CD4-positive, alpha-beta memory T cell (primary cell): ENCODE measurements at regions of chrX and their contacts with region 1.

Region 1: DNA sequence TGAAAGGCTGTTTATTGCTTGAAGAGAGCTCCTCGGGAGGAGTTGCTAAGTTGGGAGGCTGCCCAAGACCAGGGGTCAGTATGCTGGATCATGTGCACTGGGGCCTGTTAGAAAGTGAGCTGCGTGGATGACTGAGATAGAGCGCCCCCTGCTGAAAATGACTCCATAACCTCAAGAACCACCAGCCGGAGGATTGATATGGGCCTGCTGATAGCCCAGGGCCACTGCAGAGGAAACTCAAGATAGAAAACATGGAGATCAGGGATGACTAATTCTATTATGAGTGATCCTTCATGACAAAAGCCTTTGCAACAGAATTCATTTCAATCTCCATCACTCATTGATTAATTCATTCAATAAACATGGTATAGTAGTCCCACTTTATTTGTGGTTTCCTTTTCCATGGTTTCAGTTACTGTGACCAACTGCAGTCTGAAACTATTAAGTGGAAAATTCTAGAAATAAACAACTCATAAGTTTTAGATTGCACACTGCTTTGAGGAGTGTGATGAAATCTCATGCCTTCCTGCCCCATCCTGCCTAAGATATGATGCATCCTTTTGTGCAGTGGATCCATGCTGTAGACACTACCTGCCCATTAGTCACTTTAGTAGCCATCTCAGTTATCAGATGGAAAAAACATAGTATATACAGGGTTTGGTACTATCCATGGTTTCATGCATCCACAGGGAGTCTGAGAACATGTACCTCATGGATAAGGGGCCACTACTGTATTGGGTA is 126.7 kb upstream of the MBNL3 start:
- DNase-seq: peak; percentile 33 to 42 (median 37)
- H3K4me3 ChIP-seq: no peak overlapping the region
- H3K4me3 Mint-ChIP-seq: no peak overlapping the region
- H3K27ac ChIP-seq: no peak overlapping the region
- H3K27ac Mint-ChIP-seq: no peak overlapping the region
- H3K4me1 ChIP-seq: no peaks in the 10 kb centered on the region
- H3K4me1 Mint-ChIP-seq: no peaks in the 10 kb centered on the region
- H3K27me3 ChIP-seq: no peaks in the 10 kb centered on the region
- H3K27me3 Mint-ChIP-seq: no peaks in the 10 kb centered on the region

Region 2: DNA sequence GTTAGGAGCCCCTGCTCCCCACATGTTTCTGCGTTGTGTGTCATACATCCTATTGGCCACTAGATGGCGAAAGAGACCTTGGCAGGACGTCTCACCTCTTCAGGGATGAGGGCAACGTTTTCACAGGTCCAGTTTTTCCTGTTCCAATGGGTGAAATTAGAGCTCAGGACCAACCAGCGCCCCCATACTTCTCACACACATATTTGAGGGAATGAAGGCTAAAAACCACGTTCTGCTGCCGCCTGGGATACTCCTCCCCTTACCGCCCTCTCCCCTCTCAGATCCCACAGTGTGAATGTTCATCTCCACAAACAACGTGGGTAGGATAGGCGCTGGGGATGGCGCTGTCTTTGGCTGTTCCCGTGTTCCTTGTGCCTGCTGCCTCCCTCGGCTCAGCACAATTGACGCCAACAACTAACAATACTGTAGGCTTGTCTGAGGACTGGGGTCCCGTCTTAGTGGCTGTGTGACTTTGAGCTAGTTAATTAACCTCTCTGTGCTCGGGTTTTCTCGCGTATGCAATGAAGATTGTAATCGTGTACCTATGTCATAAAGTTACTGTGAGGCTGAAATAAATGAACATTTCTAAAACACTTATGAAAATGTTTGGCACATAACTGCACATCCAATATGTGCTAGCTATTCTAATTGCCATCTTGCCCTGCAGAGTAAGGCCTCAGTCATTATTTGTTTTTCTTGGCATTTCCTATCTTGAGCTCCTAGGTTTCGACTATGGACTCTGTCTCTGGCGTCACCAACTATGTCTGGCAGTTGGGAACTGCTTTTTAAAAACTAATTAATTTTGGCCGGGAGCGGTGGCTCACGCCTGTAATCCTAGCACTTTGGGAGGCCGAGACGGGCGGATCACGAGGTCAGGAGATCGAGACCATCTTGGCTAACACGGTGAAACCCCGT is 773.8 kb before region 1 on chrX:
- CTCF ChIA-PET with region 1: interaction called, 5 read pairs
- POLR2A ChIA-PET with region 1: no interaction called
- intact Hi-C with region 1: loop called (anchors 5 kb)
- DNase-seq: peak in 4 of 5 donors; percentile 50 to 65 (median 52)
- H3K4me3 ChIP-seq: no peak overlapping the region
- H3K4me3 Mint-ChIP-seq: peak overlapping the region in 1 of 8 donors; percentile 16
- H3K27ac ChIP-seq: no peak overlapping the region
- H3K27ac Mint-ChIP-seq: peak overlapping the region in 1 of 7 donors; percentile 12
- H3K4me1 ChIP-seq: no peaks in the 10 kb centered on the region
- H3K4me1 Mint-ChIP-seq: peaks cover 0 to 8% (median 5%) of the 10 kb centered on the region in 4 donors
- H3K27me3 ChIP-seq: no peaks in the 10 kb centered on the region
- H3K27me3 Mint-ChIP-seq: no peaks in the 10 kb centered on the region

Region 3: GRCh38 chrX:132092439-132093065 is 523.0 kb before region 1 on chrX:
- CTCF ChIA-PET with region 1: interaction called, 6 read pairs
- POLR2A ChIA-PET with region 1: no interaction called
- intact Hi-C with region 1: loop called (anchors 5 kb)
- DNase-seq: peak; percentile 39 to 50 (median 42)
- H3K4me3 ChIP-seq: no peak overlapping the region
- H3K4me3 Mint-ChIP-seq: peak overlapping the region in 1 of 8 donors; percentile 11
- H3K27ac ChIP-seq: no peak overlapping the region
- H3K27ac Mint-ChIP-seq: peak overlapping the region in 1 of 7 donors; percentile 41
- H3K4me1 ChIP-seq: no peaks in the 10 kb centered on the region
- H3K4me1 Mint-ChIP-seq: peaks cover 0 to 5% (median 2%) of the 10 kb centered on the region in 4 donors
- H3K27me3 ChIP-seq: no peaks in the 10 kb centered on the region
- H3K27me3 Mint-ChIP-seq: peaks cover 3% of the 10 kb centered on the region in 2 donors

Region 4: DNA sequence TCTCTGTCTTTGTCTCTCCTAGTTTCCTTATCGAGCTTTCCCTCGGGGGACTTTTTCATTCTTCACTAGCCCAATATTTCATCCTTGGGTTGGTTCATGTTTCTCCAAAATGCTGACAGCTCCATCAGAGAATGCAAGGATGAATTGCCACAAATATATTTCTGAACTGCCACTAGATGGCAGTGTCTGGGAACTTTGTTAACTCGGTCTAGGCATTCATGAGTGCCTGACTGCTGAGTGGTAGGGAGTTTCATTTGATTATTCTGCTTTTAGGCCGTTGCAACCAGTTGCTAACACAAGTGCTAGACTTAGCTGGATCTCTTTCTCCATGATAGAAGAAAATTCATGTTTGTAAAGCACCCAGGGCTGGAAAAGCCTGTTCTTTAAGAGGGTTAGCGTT is 322.8 kb before region 1 on chrX:
- CTCF ChIA-PET with region 1: interaction called, 84 read pairs
- POLR2A ChIA-PET with region 1: no interaction called
- intact Hi-C with region 1: loop called (anchors 1 kb)
- DNase-seq: peak; percentile 32 to 49 (median 37)
- H3K4me3 ChIP-seq: no peak overlapping the region
- H3K4me3 Mint-ChIP-seq: no peak overlapping the region
- H3K27ac ChIP-seq: no peak overlapping the region
- H3K27ac Mint-ChIP-seq: no peak overlapping the region
- H3K4me1 ChIP-seq: no peaks in the 10 kb centered on the region
- H3K4me1 Mint-ChIP-seq: peaks cover 0 to under 1% (median 0%) of the 10 kb centered on the region in 4 donors
- H3K27me3 ChIP-seq: no peaks in the 10 kb centered on the region
- H3K27me3 Mint-ChIP-seq: no peaks in the 10 kb centered on the region

Region 5: DNA sequence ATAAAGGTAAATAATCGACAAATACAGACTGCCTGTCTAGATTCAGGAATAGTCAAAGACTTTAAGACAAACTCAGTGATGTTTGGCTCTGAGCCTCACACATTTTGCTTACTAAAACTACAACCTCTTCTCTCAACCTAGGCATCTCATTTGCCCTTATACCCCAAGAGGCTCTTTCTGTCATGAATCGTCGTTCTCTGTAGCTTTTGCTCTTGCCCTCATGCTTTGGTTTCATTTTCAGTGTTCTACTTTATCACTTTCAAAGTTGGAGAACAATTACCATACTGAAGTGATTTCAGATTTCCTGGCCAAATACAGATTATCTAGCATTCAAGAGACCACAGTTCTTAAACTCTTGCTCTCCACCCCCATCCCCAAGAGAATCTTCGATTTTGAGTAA is 282.2 kb before region 1 on chrX:
- CTCF ChIA-PET with region 1: no interaction called
- POLR2A ChIA-PET with region 1: no interaction called
- intact Hi-C with region 1: no loop called
- DNase-seq: no peak
- H3K4me3 ChIP-seq: no peak overlapping the region
- H3K4me3 Mint-ChIP-seq: peak overlapping the region in 3 of 8 donors; percentile 2 to 12 (median 3)
- H3K27ac ChIP-seq: no peak overlapping the region
- H3K27ac Mint-ChIP-seq: peak overlapping the region in 1 of 7 donors; percentile 9
- H3K4me1 ChIP-seq: no peaks in the 10 kb centered on the region
- H3K4me1 Mint-ChIP-seq: peaks cover 2 to 9% (median 5%) of the 10 kb centered on the region in 4 donors
- H3K27me3 ChIP-seq: no peaks in the 10 kb centered on the region
- H3K27me3 Mint-ChIP-seq: no peaks in the 10 kb centered on the region

Region 6: GRCh38 chrX:132639446-132639845 is 23.9 kb after region 1 on chrX:
- CTCF ChIA-PET with region 1: no interaction called
- POLR2A ChIA-PET with region 1: no interaction called
- intact Hi-C with region 1: no loop called
- DNase-seq: no peak
- H3K4me3 ChIP-seq: no peak overlapping the region
- H3K4me3 Mint-ChIP-seq: no peak overlapping the region
- H3K27ac ChIP-seq: no peak overlapping the region
- H3K27ac Mint-ChIP-seq: peak overlapping the region in 1 of 7 donors; percentile 37
- H3K4me1 ChIP-seq: no peaks in the 10 kb centered on the region
- H3K4me1 Mint-ChIP-seq: no peaks in the 10 kb centered on the region
- H3K27me3 ChIP-seq: no peaks in the 10 kb centered on the region
- H3K27me3 Mint-ChIP-seq: peaks cover 0 to 2% of the 10 kb centered on the region in 2 donors

Region 7: DNA sequence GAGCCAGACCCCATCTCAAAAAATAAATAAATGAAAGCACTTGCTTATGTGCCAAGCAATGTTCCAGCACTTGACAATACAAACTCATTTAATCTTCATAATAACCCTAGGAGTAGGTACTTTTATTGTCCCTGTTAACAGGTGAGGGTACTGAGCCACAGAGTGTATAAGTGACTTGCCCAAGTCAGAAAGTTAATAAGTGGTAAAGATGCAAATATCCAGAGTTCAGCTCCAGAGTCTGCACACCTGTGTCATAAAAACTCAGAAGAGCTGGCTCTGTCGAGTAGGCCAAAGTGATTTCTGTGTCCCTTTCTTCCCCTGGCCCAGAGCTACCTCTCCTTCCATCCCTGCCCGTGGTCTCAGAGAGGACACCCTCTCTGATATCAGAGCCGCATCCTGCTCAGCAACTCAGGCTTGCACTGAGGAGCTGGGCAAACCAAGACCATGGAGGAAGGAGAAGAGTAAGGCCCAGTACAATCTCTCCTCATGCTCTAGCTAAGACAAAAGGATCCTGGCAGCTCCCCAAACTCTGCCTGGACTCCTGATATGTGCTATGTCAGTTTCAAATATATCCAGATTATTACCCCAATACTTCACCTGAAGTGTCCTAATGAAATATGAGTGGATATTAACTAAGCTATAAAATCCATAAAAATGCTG is 206.5 kb after region 1 on chrX:
- CTCF ChIA-PET with region 1: no interaction called
- POLR2A ChIA-PET with region 1: no interaction called
- intact Hi-C with region 1: no loop called
- DNase-seq: no peak
- H3K4me3 ChIP-seq: no peak overlapping the region
- H3K4me3 Mint-ChIP-seq: no peak overlapping the region
- H3K27ac ChIP-seq: no peak overlapping the region
- H3K27ac Mint-ChIP-seq: no peak overlapping the region
- H3K4me1 ChIP-seq: no peaks in the 10 kb centered on the region
- H3K4me1 Mint-ChIP-seq: no peaks in the 10 kb centered on the region
- H3K27me3 ChIP-seq: no peaks in the 10 kb centered on the region
- H3K27me3 Mint-ChIP-seq: no peaks in the 10 kb centered on the region